Cardiac septum (tissue), 1 donor: ENCODE measurements at regions of chr10 and their contacts with region 1.

Region 1: GRCh38 chr10:50941629-50942028 is 56.2 kb upstream of the A1CF start:
- DNase-seq: no peak

Region 2: GRCh38 chr10:50988792-50989191 is 47.2 kb after region 1 on chr10:
- intact Hi-C with region 1: loop called (anchors 5 kb)
- DNase-seq: no peak